ENCODE measurements at regions of chr1 and their contacts with region 1.

Region 1: GRCh38 chr1:157819896-157820295 is at the start of gene FCRL1:
- DNase-seq: no peak
- ATAC-seq: no peak
- H3K4me3 Mint-ChIP-seq: no peak within 1 kb of the TSS
- H3K27ac Mint-ChIP-seq: no peak within 1 kb of the TSS
- H3K4me1 Mint-ChIP-seq: no peaks in the 10 kb centered on the region
- H3K27me3 Mint-ChIP-seq: peaks cover 8% of the 10 kb centered on the region
- CTCF ChIP-seq: no peak
- total RNA-seq, gene FCRL1: 0.29 TPM in 1 of 2 experiments, not detected in the other

Region 2: DNA sequence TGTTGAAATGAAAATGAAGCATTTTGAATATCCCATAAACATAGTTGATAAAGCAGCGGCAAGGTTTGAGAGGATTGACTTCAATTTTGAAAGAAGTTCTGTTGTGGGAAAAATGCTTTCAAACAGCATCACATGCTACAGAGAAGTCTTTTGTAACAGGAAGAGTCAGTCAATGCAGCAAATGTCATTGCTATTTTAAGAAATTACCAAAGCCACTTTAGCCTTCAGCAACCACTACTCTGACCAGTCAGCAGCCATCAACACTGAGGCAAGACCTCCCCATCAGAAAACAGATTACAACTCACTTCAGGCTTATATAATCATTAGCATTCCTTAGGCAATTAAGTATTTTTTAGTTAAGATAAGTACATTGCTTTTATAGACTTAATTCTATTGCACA is 85.6 kb before region 1 on chr1:
- CTCF ChIA-PET with region 1: no interaction called
- POLR2A ChIA-PET with region 1: no interaction called
- intact Hi-C with region 1: no loop called
- DNase-seq: no peak
- ATAC-seq: no peak
- H3K4me3 Mint-ChIP-seq: no peak overlapping the region
- H3K27ac Mint-ChIP-seq: no peak overlapping the region
- H3K4me1 Mint-ChIP-seq: peaks cover 6% of the 10 kb centered on the region
- H3K27me3 Mint-ChIP-seq: no peaks in the 10 kb centered on the region
- CTCF ChIP-seq: no peak

Region 3: GRCh38 chr1:157766792-157767191 is 53.1 kb before region 1 on chr1:
- CTCF ChIA-PET with region 1: no interaction called
- POLR2A ChIA-PET with region 1: no interaction called
- intact Hi-C with region 1: loop called (anchors 5 kb)
- DNase-seq: no peak
- ATAC-seq: no peak
- H3K4me3 Mint-ChIP-seq: no peak overlapping the region
- H3K27ac Mint-ChIP-seq: no peak overlapping the region
- H3K4me1 Mint-ChIP-seq: peaks cover 4% of the 10 kb centered on the region
- H3K27me3 Mint-ChIP-seq: no peaks in the 10 kb centered on the region
- CTCF ChIP-seq: no peak

Measured in activated CD8-positive, alpha-beta T cell treated with anti-CD3 and anti-CD28 coated beads for 36 hours (primary cell).